Posterior vena cava (tissue), 2 donors: ENCODE measurements at regions of chr20 and their contacts with region 1.

Region 1: DNA sequence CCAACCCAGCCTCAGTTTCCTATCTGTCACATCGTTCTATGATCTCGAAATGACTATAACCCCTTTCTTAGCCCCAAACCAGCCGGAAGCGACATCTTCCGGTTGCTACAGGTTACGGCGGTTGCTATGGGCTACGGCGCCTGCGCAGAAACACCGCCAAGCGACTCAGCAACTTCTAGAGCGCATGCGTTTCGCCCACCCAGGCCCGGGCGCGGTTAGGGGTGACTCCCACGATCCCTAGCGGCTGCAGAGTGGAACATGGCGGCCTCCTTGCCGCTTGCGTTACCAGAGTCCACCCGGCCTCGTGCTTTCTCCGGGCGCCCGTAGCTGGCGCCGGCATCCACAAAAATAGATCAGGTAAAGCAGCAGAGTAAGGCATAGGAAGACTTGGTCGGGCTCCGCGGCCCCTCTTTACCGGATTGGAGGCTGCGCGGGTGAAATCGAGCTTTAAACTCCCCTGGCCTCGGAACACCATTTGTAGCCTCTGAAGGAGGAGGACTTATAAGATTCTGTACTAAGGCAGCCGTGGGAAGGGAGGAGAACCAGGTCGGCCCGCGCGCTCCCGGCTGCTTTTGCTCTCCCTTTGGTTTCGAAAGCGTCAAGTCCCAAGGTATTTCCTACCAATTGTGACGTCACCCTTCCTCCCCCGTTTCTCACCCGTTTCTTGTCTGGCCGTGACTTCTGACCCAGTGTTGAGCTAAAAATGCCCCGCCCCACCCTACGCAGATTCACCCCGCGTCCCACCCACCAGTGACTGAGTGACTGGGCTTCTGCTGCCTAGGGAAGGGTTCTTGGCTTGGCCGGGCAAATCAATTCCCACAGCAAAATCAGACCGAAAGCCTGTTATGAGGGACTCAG is 3.5 kb downstream of the SDCBP2 start:
- DNase-seq: peak; percentile 100

Region 2: GRCh38 chr20:833450-834150 is 491.8 kb before region 1 on chr20 and contains the start of gene FAM110A:
- intact Hi-C with region 1: no loop called
- DNase-seq: peak; percentile 99
- total RNA-seq, gene FAM110A: 2.7 to 4.0 TPM

Region 3: DNA sequence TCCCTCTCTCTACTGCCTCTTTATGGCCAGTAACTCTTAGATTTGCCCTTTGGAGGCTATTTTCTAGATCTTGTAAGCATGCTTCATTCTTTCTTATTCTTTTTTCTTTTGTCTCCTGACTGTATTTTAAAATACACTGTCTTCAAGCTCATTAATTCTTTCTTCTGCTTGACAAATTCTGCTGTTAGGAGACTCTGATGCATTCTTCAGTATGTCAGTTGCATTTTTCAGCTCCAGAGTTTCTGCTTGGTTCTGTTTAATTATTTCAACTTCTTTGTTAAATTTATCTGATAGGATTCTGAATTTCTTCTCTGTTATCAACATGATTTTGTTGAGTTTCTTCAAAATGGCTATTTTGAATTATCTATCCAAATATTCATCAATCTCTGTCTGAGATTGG is 28.6 kb after region 1 on chr20:
- intact Hi-C with region 1: loop called in 1 of 2 experiments (anchors 1 kb)
- DNase-seq: no peak